Activated CD8-positive, alpha-beta T cell treated with anti-CD3 and anti-CD28 coated beads, Interleukin-2, amount 10 ng/mL, durations not matched to agents 7 days and 5 days (primary cell): ENCODE measurements at regions of chr2 and their contacts with region 1.

Region 1: GRCh38 chr2:42663106-42663780 is 94.8 kb downstream of the MTA3 start:
- DNase-seq: peak; percentile 75
- ATAC-seq: peak; percentile 91
- H3K4me3 Mint-ChIP-seq: no peak overlapping the region
- H3K27ac Mint-ChIP-seq: peak overlapping the region; percentile 12
- H3K4me1 Mint-ChIP-seq: peaks cover 11% of the 10 kb centered on the region
- H3K27me3 Mint-ChIP-seq: no peaks in the 10 kb centered on the region

Region 2: DNA sequence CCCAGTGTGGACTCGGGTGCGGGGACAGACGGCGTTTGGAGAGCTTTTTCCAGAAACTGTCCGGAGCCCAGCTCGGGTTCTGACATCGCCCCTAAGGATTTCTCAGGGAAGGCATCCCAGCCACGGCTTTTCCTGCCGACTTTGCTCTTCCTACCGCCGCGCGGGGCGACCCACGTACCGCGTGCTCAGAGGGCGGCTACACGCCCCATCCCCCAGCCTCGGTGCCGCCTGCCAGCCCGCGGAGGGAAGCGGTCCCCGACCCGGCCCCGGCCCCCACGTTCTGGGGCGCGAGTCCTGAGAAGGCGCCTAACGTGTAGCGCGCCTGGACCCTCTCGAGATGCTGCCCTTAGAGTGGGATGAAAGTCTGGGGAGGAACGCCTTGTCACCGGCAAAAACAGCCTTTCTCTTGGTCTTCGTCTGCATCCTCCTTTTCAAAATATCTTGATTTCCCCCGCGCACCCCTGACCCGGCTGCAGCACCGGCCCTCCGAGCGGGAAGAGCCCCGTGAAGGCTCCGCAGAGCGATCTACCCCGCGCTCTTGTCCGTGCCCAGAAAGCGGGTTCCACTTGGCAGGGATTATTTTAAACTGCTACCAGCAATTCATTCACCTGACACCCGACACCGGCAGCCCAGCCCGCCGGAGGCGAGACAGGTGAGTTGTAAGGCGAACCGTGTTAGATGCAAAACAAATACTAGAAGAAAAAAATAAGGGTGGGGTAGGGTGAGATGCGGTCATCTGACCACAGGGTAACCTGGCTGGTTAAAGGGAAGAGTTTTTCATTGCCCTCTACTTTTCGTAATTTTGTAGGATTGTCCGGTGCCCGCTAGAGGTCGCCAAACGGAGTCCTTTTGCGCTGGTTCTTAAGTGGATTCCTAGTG is 168.6 kb before region 1 on chr2:
- CTCF ChIA-PET with region 1: interaction called, 35 read pairs
- POLR2A ChIA-PET with region 1: no interaction called
- DNase-seq: peak; percentile 87
- ATAC-seq: peak; percentile 60
- H3K4me3 Mint-ChIP-seq: peak overlapping the region; percentile 88
- H3K27ac Mint-ChIP-seq: peak overlapping the region; percentile 79
- H3K4me1 Mint-ChIP-seq: peaks cover 12% of the 10 kb centered on the region
- H3K27me3 Mint-ChIP-seq: peaks cover 17% of the 10 kb centered on the region

Region 3: DNA sequence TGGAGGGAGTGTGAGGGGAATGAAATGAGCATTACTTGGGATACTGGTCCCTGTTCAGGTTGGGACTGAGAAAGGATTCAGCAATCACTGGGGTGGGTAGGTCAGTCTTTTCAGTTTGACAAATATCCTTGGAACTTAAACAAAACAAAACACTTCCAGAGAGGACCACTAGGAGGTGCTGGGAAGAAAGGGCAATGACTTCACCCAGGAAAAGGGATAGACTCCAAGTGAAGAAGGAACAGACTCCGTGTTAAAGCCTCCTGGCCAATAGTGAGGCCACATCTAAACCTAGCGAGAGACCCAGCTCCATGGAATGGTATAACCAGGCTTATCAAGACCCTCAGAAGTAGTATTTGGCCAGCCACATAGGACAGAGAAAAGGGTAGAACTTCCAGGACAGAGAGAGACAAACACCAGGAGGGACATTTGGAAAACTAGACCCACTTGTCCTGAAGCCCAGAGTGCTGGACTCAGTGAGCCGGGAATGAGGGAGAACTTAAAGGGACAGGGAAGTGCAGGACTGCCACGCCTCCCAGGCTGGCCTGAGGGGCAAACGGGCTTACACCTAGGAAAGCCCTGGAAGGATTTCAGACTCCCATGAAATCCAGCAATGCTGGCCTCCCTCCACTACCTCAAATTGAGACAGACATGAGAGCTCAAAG is 149.9 kb before region 1 on chr2:
- CTCF ChIA-PET with region 1: interaction called, 18 read pairs
- POLR2A ChIA-PET with region 1: no interaction called
- DNase-seq: peak; percentile 29
- ATAC-seq: no peak
- H3K4me3 Mint-ChIP-seq: no peak overlapping the region
- H3K27ac Mint-ChIP-seq: no peak overlapping the region
- H3K4me1 Mint-ChIP-seq: peaks cover 11% of the 10 kb centered on the region
- H3K27me3 Mint-ChIP-seq: no peaks in the 10 kb centered on the region

Region 4: DNA sequence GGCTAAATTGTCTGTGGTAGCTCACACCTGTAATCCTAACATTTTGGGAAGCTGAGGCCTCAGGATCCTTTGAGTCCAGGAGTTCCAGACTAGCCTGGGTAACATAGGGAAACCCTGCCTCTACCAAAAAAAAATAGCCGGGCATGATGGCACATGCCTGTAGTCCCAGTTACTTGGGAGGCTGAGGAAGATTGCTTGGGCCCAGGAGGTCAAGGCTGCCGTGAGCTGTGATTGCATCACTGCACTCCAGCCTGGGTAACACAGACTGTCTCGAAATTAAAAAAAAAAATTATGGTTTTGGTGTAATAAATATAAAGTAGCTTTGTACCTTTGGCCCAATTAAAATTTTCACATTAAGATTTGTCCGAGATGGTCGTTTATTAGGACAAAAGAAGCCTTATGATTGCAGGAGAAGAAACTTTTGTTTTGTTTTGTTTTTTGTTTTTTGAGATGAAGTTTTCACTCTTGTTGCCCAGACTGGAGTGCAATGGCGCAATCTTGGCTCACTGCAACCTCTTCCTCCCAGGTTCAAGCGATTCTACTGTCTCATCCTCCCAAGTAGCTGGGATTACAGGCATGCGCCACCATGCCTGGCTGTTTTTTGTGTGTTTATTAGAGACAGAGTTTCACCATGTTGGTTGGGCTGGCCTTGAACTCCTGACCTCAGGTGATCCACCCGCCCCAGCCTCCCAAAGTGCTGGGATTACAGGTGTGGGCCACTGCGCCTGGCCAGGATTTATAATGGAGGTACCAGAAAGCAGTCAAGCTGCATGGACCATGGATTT is 90.8 kb before region 1 on chr2:
- CTCF ChIA-PET with region 1: interaction called, 10 read pairs
- POLR2A ChIA-PET with region 1: no interaction called
- DNase-seq: no peak
- ATAC-seq: no peak
- H3K4me3 Mint-ChIP-seq: no peak overlapping the region
- H3K27ac Mint-ChIP-seq: no peak overlapping the region
- H3K4me1 Mint-ChIP-seq: peaks cover 37% of the 10 kb centered on the region
- H3K27me3 Mint-ChIP-seq: no peaks in the 10 kb centered on the region

Region 5: GRCh38 chr2:42652086-42652485 is 11.2 kb before region 1 on chr2:
- CTCF ChIA-PET with region 1: interaction called, 33 read pairs
- POLR2A ChIA-PET with region 1: no interaction called
- DNase-seq: peak; percentile 68
- ATAC-seq: peak; percentile 66
- H3K4me3 Mint-ChIP-seq: peak overlapping the region; percentile 65
- H3K27ac Mint-ChIP-seq: peak overlapping the region; percentile 89
- H3K4me1 Mint-ChIP-seq: peaks cover 43% of the 10 kb centered on the region
- H3K27me3 Mint-ChIP-seq: no peaks in the 10 kb centered on the region

Region 6: DNA sequence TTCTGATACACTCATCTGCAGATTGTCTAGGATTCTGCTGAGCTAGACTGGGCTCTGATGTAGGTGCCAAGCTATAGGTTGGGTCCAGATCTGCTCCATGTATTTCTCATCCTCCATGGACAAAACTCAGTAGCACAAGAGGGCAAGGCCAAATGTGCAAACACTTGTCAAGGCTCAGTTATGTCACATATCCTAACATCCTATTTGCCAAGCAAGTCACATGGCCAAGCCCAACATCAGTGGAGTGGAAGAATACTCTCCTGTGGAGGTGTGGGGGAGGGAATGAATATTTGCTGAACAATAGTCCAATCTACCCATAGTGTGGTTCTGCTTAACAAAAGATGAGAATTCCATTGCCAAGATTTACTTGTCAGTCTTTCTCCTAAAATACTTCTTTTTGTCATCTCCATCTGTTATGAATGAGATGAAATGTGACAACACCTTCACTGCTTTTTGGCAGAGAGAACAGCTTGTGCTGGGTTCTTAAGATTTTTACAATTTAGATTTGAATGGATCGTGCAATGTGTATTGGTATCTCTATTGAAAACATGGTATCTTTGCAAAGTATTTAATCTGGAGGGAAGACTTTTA is 10.8 kb after region 1 on chr2:
- CTCF ChIA-PET with region 1: interaction called, 13 read pairs
- POLR2A ChIA-PET with region 1: interaction called, 3 read pairs
- DNase-seq: no peak
- ATAC-seq: no peak
- H3K4me3 Mint-ChIP-seq: no peak overlapping the region
- H3K27ac Mint-ChIP-seq: peak overlapping the region; percentile 30
- H3K4me1 Mint-ChIP-seq: peaks cover 9% of the 10 kb centered on the region
- H3K27me3 Mint-ChIP-seq: no peaks in the 10 kb centered on the region

Region 7: GRCh38 chr2:42706836-42707235 is 43.6 kb after region 1 on chr2:
- CTCF ChIA-PET with region 1: no interaction called
- POLR2A ChIA-PET with region 1: no interaction called
- DNase-seq: no peak
- ATAC-seq: no peak
- H3K4me3 Mint-ChIP-seq: no peak overlapping the region
- H3K27ac Mint-ChIP-seq: no peak overlapping the region
- H3K4me1 Mint-ChIP-seq: no peaks in the 10 kb centered on the region
- H3K27me3 Mint-ChIP-seq: no peaks in the 10 kb centered on the region